WTC11 (cell line): ENCODE measurements at regions of chr12 and their contacts with region 1.

Region 1: DNA sequence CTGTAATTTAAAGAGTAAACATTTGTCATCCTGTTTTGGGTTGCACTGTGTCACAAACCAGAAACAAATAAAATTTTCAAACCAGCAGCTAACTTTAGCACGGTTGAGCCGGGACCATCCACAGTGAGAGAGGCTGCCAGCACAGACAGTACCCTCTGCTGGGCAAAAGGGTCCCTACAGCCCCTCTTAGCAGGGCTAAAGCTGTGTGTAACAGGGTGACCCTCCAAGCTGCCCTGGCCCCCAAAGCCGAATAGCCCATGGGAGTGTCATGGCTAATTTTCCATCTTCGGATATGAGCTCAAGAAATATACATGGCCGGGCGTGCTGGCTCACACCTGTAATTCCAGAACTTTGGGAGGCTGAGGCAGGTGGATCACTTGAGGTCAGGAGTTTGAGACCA is 157.1 kb upstream of the GRIN2B start:
- DNase-seq: peak; percentile 64
- ATAC-seq: peak; percentile 100
- H3K4me3 Mint-ChIP-seq: no peak overlapping the region
- H3K27ac Mint-ChIP-seq: no peak overlapping the region
- H3K4me1 Mint-ChIP-seq: no peaks in the 10 kb centered on the region
- H3K27me3 Mint-ChIP-seq: no peaks in the 10 kb centered on the region
- CTCF ChIP-seq: peak; percentile 50

Region 2: DNA sequence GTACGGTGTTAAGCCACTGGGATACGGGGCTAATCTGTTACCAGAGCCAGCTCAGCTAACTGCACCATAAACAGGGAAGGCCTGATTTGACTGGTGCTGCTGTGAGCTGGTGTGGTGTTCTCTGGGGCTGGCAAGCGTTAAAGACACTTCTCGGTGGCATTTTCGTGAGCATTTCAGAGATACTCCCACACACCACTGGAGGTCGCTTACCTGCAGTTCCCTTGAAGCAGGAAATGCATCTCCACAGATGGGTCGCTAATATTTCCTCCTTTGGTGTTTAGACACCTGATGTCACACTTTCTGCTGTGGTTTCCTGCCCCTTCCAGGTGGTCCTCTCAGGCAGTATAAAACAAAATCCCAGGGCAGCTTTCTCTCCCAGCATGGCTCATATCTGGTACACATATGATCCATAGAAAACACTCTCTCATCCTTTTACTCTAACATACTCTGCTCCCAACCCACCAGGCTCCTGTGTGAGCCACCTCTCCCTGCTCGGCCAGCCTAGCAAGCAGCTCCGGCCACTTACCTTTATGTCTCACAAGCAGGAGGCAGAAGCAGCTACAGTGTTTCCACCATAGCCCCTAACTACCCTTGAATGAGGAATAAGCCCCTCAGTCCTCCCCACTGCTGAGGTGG is 27.1 kb before region 1 on chr12:
- CTCF ChIA-PET with region 1: interaction called, 19 read pairs
- POLR2A ChIA-PET with region 1: no interaction called
- DNase-seq: peak; percentile 42
- ATAC-seq: peak; percentile 98
- H3K4me3 Mint-ChIP-seq: no peak overlapping the region
- H3K27ac Mint-ChIP-seq: no peak overlapping the region
- H3K4me1 Mint-ChIP-seq: 0 out of 2 replicates have a peak, but pooled peaks cover 6% of the 10 kb centered on the region
- H3K27me3 Mint-ChIP-seq: peaks cover 6% of the 10 kb centered on the region; the same call in 1 of the 2 replicates
- CTCF ChIP-seq: peak; percentile 41

Region 3: GRCh38 chr12:14153803-14154202 is 15.3 kb after region 1 on chr12:
- CTCF ChIA-PET with region 1: interaction called, 22 read pairs
- POLR2A ChIA-PET with region 1: no interaction called
- DNase-seq: no peak
- ATAC-seq: no peak
- H3K4me3 Mint-ChIP-seq: no peak overlapping the region
- H3K27ac Mint-ChIP-seq: no peak overlapping the region
- H3K4me1 Mint-ChIP-seq: peaks cover 26% of the 10 kb centered on the region
- H3K27me3 Mint-ChIP-seq: no peaks in the 10 kb centered on the region
- CTCF ChIP-seq: no peak

Region 4: DNA sequence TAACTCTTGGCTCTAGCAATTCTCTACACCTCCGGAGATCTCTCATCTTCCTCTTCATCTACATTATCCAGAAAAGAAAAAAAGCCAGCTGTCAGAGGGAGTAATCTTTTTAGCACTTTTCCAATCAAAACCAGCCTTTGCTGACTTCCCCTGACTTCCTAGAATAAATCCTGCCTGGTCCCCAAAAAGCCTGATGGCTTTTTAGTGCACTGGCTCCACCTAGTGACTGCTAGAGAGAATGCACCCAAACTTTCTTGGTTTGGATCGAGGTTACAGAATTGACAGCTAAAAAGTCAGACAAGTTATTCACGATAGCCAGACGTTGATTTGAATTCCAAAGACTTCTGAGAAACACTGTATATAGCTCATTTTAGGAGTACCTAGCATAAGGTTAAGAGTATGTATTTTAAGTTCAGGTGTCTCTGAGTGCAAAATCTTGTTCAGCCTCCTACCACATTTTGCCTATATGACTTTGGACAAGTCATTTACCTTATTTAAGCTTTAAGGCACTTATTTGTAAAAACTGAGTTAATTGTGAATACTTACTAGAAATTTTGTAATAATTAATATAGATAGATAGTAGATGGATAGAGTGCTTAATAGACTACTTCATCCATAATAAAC is 28.6 kb after region 1 on chr12:
- CTCF ChIA-PET with region 1: interaction called, 38 read pairs
- POLR2A ChIA-PET with region 1: no interaction called
- DNase-seq: peak; percentile 61
- ATAC-seq: peak; percentile 44
- H3K4me3 Mint-ChIP-seq: no peak overlapping the region
- H3K27ac Mint-ChIP-seq: no peak overlapping the region
- H3K4me1 Mint-ChIP-seq: no peaks in the 10 kb centered on the region; the same call in 1 of the 2 replicates
- H3K27me3 Mint-ChIP-seq: peaks cover 6% of the 10 kb centered on the region
- CTCF ChIP-seq: peak; percentile 76